ENCODE measurements at regions of chr7 and their contacts with region 1.

Region 1: GRCh38 chr7:140646931-140647647 is 6.5 kb upstream of the DENND2A start:
- DNase-seq: peak in 1 of 2 experiments; percentile 78
- H3K4me3 ChIP-seq: no peak overlapping the region
- H3K27ac ChIP-seq: no peak overlapping the region
- H3K4me1 ChIP-seq: peaks cover 0 to 6% (median 5%) of the 10 kb centered on the region in 4 experiments; a peak in 4 of 7 replicates
- H3K27me3 ChIP-seq: peaks cover 0 to 4% (median under 1%) of the 10 kb centered on the region in 4 experiments; a peak in 2 of 7 replicates
- CTCF ChIP-seq: peak; percentile 77 to 95 (median 94)
- EP300 ChIP-seq: no peak
- POLR2A ChIP-seq: no peak
- RAD21 ChIP-seq: peak; percentile 43 to 63

Region 2: DNA sequence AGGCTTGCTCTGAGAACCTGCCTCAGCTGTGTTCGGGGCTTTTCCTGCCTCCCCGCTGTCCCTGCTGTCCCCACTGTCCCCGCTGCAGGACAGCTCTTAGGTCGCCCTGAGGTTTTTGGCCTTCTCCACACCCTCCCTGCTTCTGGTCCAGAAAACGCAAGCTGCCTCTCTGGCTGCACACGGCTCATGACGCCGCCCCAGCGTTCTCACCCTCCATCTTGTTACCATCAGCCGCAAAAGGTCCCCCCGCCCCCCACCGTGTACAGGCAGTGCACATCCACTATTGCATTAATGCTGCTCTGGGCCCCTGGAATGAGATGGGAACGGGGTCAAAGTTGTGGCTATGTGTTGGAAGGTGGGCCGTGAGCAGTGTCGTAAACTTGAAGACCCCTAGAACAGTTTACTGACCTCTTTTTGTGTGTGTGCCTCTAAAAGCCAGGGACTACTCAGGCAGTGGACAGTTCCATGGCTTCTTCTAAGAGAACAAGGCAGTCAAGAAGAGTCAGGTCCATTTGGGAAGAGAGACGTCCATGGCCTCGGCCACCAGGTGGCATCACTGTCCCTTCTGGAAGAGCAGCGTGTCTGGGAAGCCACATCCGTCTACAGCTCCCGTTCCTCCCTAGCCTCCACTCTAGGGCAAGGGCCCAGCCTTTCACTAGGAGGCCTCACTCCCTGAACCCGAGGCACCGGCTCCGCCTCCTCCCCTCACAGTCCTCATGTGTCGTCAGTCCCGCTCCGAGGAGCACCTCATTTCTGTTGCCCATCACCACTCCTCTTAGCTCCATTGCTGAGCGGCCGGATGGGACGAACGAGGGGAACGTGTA is 129.3 kb before region 1 on chr7:
- CTCF ChIA-PET with region 1: interaction called, 322 read pairs
- POLR2A ChIA-PET with region 1: no interaction called
- DNase-seq: peak; percentile 93 to 95
- H3K4me3 ChIP-seq: no peak overlapping the region
- H3K27ac ChIP-seq: no peak overlapping the region
- H3K4me1 ChIP-seq: peaks cover 2 to 6% (median 3%) of the 10 kb centered on the region in 4 experiments; a peak in 3 of 7 replicates
- H3K27me3 ChIP-seq: no peaks in the 10 kb centered on the region
- CTCF ChIP-seq: peak; percentile 93 to 98 (median 96)
- EP300 ChIP-seq: no peak
- POLR2A ChIP-seq: no peak
- RAD21 ChIP-seq: peak; percentile 93 to 99

Region 3: GRCh38 chr7:140541513-140542227 is 105.4 kb before region 1 on chr7:
- CTCF ChIA-PET with region 1: interaction called, 17 read pairs
- POLR2A ChIA-PET with region 1: no interaction called
- DNase-seq: peak; percentile 66 to 74
- H3K4me3 ChIP-seq: peak overlapping the region; percentile 1 to 48 (median 32); a peak in 6 of 8 replicates
- H3K27ac ChIP-seq: peak overlapping the region; percentile 85
- H3K4me1 ChIP-seq: peaks cover 6 to 22% (median 8%) of the 10 kb centered on the region in 4 experiments
- H3K27me3 ChIP-seq: no peaks in the 10 kb centered on the region
- CTCF ChIP-seq: no peak
- EP300 ChIP-seq: no peak
- POLR2A ChIP-seq: peak in 1 of 2 experiments; percentile 62; a peak in 1 of 3 replicates
- RAD21 ChIP-seq: no peak; a peak in 1 of 4 replicates

Region 4: GRCh38 chr7:140607441-140607989 is 39.6 kb before region 1 on chr7:
- CTCF ChIA-PET with region 1: interaction called, 34 read pairs
- POLR2A ChIA-PET with region 1: no interaction called
- DNase-seq: no peak
- H3K4me3 ChIP-seq: no peak overlapping the region
- H3K27ac ChIP-seq: no peak overlapping the region
- H3K4me1 ChIP-seq: no peaks in the 10 kb centered on the region; a peak in 1 of 7 replicates
- H3K27me3 ChIP-seq: no peaks in the 10 kb centered on the region
- CTCF ChIP-seq: no peak
- EP300 ChIP-seq: no peak
- POLR2A ChIP-seq: no peak
- RAD21 ChIP-seq: no peak

Region 5: DNA sequence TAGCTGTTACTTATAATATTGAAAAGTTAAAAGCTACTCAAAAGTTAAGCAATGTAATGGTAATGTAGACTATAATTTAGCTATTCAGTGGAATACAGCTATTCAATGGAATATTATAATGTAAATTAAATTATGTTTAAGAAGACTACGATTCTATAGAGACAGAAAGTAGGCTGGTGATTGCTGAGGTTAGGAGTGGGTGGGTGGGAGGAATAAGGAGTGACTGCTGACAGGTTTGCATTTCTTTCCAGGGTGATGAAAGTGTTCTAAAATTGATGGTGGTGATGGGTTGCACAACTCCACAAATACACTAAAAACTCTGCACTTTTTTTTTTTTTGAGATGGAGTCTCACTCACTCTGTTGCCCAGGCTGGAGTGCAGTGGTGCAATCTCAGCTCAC is 27.9 kb before region 1 on chr7:
- CTCF ChIA-PET with region 1: interaction called, 17 read pairs
- POLR2A ChIA-PET with region 1: no interaction called
- DNase-seq: no peak
- H3K4me3 ChIP-seq: no peak overlapping the region
- H3K27ac ChIP-seq: no peak overlapping the region
- H3K4me1 ChIP-seq: peaks cover 0 to 3% (median under 1%) of the 10 kb centered on the region in 4 experiments; a peak in 4 of 7 replicates
- H3K27me3 ChIP-seq: no peaks in the 10 kb centered on the region
- CTCF ChIP-seq: no peak
- EP300 ChIP-seq: no peak
- POLR2A ChIP-seq: no peak
- RAD21 ChIP-seq: no peak

Region 6: GRCh38 chr7:140631602-140632001 is 15.5 kb before region 1 on chr7:
- CTCF ChIA-PET with region 1: interaction called, 17 read pairs
- POLR2A ChIA-PET with region 1: interaction called, 3 read pairs
- DNase-seq: no peak
- H3K4me3 ChIP-seq: no peak overlapping the region
- H3K27ac ChIP-seq: no peak overlapping the region
- H3K4me1 ChIP-seq: peaks cover 7 to 10% (median 10%) of the 10 kb centered on the region in 4 experiments
- H3K27me3 ChIP-seq: no peaks in the 10 kb centered on the region
- CTCF ChIP-seq: no peak
- EP300 ChIP-seq: no peak
- POLR2A ChIP-seq: no peak
- RAD21 ChIP-seq: no peak